Activated CD4-positive, alpha-beta T cell treated with anti-CD3 and anti-CD28 coated beads for 36 hours (primary cell): ENCODE measurements at regions of chr21 and their contacts with region 1.

Region 1: GRCh38 chr21:42337830-42338728 is 12.7 kb downstream of the TFF2 start:
- DNase-seq: peak; percentile 93
- ATAC-seq: peak; percentile 97
- H3K4me3 Mint-ChIP-seq: peak overlapping the region; percentile 6
- H3K27ac Mint-ChIP-seq: peak overlapping the region; percentile 69
- H3K4me1 Mint-ChIP-seq: peaks cover 21% of the 10 kb centered on the region
- H3K27me3 Mint-ChIP-seq: peaks cover 2% of the 10 kb centered on the region

Region 2: DNA sequence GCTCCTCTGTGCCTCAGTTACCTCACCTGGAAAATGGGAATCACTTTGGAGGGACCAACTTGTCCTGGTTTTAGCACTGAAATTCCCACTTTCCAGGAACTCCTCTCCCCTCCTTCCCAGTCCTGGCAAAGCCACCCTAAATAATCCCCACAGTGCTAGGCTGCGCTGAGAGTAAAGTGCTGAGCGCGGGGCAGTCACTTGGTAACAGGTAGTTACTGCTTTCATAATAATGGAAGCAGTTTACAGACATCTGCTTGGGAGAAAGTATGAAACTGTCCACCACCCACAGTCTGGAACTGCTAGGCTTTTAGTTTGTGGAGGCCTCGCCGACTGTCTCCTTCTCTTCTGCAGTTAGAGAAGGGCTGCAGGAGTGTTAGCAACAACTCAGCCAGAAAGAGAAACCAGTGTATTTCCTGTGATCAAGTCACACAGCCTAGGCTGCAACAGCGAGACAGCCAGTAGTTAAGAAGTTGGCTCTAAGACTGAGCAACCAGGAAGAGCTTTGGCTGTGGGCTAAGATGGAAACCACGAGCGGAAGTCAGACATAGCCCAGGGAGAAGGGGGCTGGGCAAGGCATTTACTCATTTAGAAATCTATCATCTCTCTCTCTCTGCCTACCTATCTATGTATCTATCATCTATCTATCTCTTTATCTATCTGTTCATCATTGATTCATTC is 150.0 kb before region 1 on chr21:
- CTCF ChIA-PET with region 1: no interaction called
- POLR2A ChIA-PET with region 1: no interaction called
- intact Hi-C with region 1: no loop called
- DNase-seq: peak; percentile 88
- ATAC-seq: peak; percentile 93
- H3K4me3 Mint-ChIP-seq: peak overlapping the region; percentile 57
- H3K27ac Mint-ChIP-seq: peak overlapping the region; percentile 95
- H3K4me1 Mint-ChIP-seq: peaks cover 65% of the 10 kb centered on the region
- H3K27me3 Mint-ChIP-seq: peaks cover 2% of the 10 kb centered on the region

Region 3: DNA sequence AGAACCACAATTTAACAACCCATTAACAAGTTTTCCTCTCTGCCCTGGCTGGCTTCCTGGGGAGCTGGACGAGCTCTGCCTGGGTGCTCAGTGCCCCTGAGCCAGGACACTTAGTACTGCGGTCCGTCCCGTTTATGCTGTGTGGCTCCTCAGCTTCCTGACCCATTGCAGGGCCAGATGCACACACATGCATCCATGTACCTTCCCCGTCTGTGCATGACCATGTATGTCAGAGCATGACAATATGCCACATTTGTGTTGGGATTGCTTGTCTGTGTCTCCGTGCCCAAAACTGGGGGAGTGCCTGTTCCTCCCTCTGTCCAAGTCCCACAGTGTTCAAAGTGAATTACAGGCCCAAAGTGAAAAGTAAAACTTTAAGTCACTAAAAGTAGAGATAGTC is 13.2 kb before region 1 on chr21:
- CTCF ChIA-PET with region 1: interaction called, 22 read pairs
- POLR2A ChIA-PET with region 1: interaction called, 5 read pairs
- intact Hi-C with region 1: no loop called
- DNase-seq: no peak
- ATAC-seq: no peak
- H3K4me3 Mint-ChIP-seq: no peak overlapping the region
- H3K27ac Mint-ChIP-seq: no peak overlapping the region
- H3K4me1 Mint-ChIP-seq: no peaks in the 10 kb centered on the region
- H3K27me3 Mint-ChIP-seq: peaks cover 5% of the 10 kb centered on the region

Region 4: DNA sequence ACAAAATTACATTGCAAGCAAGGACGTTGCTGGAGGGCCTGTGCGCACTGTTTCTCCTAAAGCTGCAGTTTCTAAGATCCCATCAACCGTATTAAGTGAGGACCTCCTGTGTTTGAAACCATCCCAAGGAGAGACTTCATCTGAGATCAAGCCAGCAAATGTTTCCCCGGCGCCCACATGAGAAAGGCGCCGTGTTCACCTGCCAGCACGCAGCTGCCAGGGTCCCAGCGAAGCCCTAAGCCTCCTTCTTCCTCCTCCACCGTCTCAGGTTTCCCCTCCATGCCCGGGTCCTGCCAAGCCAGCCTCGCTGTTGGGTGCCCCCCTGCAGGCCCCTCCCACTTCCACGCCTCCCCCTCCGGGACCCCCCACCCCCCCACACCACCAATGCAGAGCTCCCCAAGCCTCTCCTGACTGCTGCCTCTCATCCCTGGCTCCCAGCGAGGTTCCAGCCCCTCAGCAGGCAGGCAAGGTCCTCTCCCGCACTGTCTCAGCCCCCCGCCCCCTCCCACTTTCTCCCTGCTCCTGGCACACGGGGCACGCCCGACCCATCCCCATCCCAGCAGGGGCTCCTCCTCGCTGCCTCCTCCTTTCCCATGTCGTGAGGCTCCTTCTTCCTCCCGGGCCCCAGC is 36.9 kb after region 1 on chr21:
- CTCF ChIA-PET with region 1: interaction called, 11 read pairs
- POLR2A ChIA-PET with region 1: interaction called, 3 read pairs
- intact Hi-C with region 1: loop called (anchors 1 to 5 kb)
- DNase-seq: peak; percentile 47
- ATAC-seq: peak; percentile 31
- H3K4me3 Mint-ChIP-seq: peak overlapping the region; percentile 57
- H3K27ac Mint-ChIP-seq: peak overlapping the region; percentile 92
- H3K4me1 Mint-ChIP-seq: peaks cover 50% of the 10 kb centered on the region
- H3K27me3 Mint-ChIP-seq: no peaks in the 10 kb centered on the region

Region 5: DNA sequence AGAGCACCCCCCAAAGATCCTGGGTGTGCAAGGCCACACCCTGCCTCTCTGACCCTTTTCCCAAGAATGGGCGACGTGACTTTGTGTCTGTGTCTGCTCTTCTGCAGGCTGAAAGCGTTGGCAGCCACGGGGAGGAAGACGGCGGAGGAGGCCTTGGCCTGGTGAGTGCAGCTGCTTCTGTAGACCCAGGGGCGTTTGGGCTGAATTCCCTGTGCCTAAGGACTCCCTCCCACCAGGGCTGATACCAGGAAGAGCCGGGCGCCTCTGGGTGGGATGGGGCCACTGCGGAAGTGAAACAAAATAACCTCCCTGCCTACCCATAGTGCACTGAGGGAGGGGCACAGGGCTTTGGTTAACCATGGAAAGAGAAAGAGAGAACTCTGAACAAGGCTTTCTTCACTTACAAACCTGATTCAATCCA is 68.1 kb after region 1 on chr21:
- CTCF ChIA-PET with region 1: interaction called, 4 read pairs
- POLR2A ChIA-PET with region 1: no interaction called
- intact Hi-C with region 1: loop called in 1 of 2 experiments (anchors 5 kb)
- DNase-seq: peak; percentile 85
- ATAC-seq: peak; percentile 75
- H3K4me3 Mint-ChIP-seq: peak overlapping the region; percentile 99
- H3K27ac Mint-ChIP-seq: peak overlapping the region; percentile 98
- H3K4me1 Mint-ChIP-seq: peaks cover 42% of the 10 kb centered on the region
- H3K27me3 Mint-ChIP-seq: no peaks in the 10 kb centered on the region

Region 6: DNA sequence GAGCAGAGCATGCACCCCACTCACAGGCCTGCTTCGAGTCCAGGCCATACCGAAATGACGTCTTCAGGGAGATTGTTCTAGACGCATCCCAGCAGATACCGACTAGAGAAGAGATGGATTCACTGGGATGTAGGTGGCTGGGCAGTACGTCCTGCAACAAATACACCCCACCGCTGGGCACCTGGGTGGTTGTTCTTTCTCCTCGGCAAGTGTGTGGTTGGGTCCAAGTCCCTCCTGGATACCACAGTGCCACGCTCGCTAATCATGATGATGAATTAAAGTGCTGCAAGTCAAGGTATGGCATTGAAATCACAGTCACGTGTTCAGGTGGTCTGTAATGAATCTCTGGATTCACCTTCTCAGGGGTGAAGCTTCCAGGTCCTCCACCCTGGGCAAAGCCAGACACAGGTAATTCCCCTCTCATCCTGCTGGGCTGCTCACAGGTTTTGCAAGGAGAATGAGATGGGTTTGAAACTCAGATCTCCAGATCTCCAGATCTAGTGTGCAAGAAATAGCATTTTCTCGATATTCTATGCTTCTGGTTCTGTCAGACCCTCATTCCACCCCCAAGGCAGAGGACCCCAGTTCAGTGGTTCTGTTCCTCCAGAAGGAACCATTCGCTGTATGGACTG is 111.3 kb after region 1 on chr21:
- CTCF ChIA-PET with region 1: interaction called, 23 read pairs
- POLR2A ChIA-PET with region 1: no interaction called
- intact Hi-C with region 1: loop called (anchors 1 kb)
- DNase-seq: no peak
- ATAC-seq: no peak
- H3K4me3 Mint-ChIP-seq: no peak overlapping the region
- H3K27ac Mint-ChIP-seq: peak overlapping the region; percentile 86
- H3K4me1 Mint-ChIP-seq: peaks cover 52% of the 10 kb centered on the region
- H3K27me3 Mint-ChIP-seq: no peaks in the 10 kb centered on the region

Region 7: DNA sequence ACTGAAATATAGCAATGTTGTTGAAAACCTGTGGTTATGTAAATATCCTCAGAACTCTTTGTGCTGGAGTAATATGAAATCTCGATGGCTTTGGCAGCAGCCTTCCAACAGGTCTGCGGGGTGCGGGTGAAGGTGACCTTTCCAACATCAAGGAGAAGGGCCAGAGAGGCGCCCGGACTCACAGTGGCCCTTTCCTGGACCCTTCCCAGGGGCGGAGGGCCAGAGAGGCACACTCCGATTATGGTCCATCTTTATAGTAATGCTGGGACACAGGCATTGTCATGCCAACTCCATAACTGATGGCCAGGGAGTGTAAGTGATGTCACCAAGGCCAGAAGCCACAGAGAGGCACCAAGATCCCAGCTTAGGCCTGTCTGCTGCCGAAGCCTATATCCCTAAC is 193.7 kb after region 1 on chr21:
- CTCF ChIA-PET with region 1: no interaction called
- POLR2A ChIA-PET with region 1: no interaction called
- intact Hi-C with region 1: no loop called
- DNase-seq: no peak
- ATAC-seq: no peak
- H3K4me3 Mint-ChIP-seq: no peak overlapping the region
- H3K27ac Mint-ChIP-seq: no peak overlapping the region
- H3K4me1 Mint-ChIP-seq: peaks cover 43% of the 10 kb centered on the region
- H3K27me3 Mint-ChIP-seq: no peaks in the 10 kb centered on the region

Region 8: GRCh38 chr21:42878993-42879787 is 541.1 kb after region 1 on chr21 and contains the start of gene WDR4:
- CTCF ChIA-PET with region 1: no interaction called
- POLR2A ChIA-PET with region 1: no interaction called
- intact Hi-C with region 1: no loop called
- DNase-seq: peak; percentile 99
- ATAC-seq: peak; percentile 93
- H3K4me3 Mint-ChIP-seq: peak within 1 kb of the TSS; percentile 92
- H3K27ac Mint-ChIP-seq: peak within 1 kb of the TSS; percentile 99
- H3K4me1 Mint-ChIP-seq: peaks cover 17% of the 10 kb centered on the region
- H3K27me3 Mint-ChIP-seq: no peaks in the 10 kb centered on the region
- total RNA-seq, gene WDR4: 34.0 to 46.5 TPM